Dendritic cell treated with granulocyte-macrophage colony-stimulating factor and Interleukin-4, amounts not matched to agents 40 ng/mL and 50 ng/mL, for 4 days (primary cell): ENCODE measurements at regions of chr1 and their contacts with region 1.

Region 1: GRCh38 chr1:37890378-37891014 is 31.1 kb upstream of the MTF1 start:
- H3K4me3 Mint-ChIP-seq: no peak overlapping the region
- H3K27ac Mint-ChIP-seq: peak overlapping the region; percentile 50
- H3K4me1 Mint-ChIP-seq: peaks cover 13% of the 10 kb centered on the region
- H3K27me3 Mint-ChIP-seq: no peaks in the 10 kb centered on the region

Region 2: GRCh38 chr1:36824390-36824861 is 1066.1 kb before region 1 on chr1:
- intact Hi-C with region 1: no loop called
- H3K4me3 Mint-ChIP-seq: no peak overlapping the region
- H3K27ac Mint-ChIP-seq: no peak overlapping the region
- H3K4me1 Mint-ChIP-seq: peaks cover 5% of the 10 kb centered on the region
- H3K27me3 Mint-ChIP-seq: peaks cover 13% of the 10 kb centered on the region

Region 3: GRCh38 chr1:37974567-37974966 is 84.1 kb after region 1 on chr1:
- intact Hi-C with region 1: loop called (anchors 2 kb)
- H3K4me3 Mint-ChIP-seq: no peak overlapping the region
- H3K27ac Mint-ChIP-seq: no peak overlapping the region
- H3K4me1 Mint-ChIP-seq: no peaks in the 10 kb centered on the region
- H3K27me3 Mint-ChIP-seq: no peaks in the 10 kb centered on the region